ENCODE measurements at regions of chr15 and their contacts with region 1.

Region 1: DNA sequence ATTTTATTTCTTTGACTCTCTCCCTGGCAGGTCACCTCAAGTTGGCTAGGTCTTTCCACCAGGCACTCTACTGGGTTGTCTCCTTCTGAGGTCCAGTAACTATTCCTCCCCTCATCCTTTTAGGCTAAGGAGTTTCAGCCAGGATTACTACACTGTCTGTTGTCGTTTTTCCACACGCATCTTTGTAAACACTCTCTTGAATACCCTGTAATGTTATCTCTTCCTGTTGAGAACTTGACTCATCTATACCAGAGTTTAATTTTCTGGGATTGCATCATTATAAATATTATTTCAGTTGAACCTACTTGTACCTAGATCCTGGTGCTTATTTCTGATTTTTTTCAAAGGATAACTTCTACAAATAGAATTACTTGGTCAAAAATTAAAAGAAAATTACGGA is 138.3 kb downstream of the SQOR start:
- DNase-seq: no peak
- H3K27ac ChIP-seq: no peak overlapping the region
- CTCF ChIP-seq: no peak

Region 2: DNA sequence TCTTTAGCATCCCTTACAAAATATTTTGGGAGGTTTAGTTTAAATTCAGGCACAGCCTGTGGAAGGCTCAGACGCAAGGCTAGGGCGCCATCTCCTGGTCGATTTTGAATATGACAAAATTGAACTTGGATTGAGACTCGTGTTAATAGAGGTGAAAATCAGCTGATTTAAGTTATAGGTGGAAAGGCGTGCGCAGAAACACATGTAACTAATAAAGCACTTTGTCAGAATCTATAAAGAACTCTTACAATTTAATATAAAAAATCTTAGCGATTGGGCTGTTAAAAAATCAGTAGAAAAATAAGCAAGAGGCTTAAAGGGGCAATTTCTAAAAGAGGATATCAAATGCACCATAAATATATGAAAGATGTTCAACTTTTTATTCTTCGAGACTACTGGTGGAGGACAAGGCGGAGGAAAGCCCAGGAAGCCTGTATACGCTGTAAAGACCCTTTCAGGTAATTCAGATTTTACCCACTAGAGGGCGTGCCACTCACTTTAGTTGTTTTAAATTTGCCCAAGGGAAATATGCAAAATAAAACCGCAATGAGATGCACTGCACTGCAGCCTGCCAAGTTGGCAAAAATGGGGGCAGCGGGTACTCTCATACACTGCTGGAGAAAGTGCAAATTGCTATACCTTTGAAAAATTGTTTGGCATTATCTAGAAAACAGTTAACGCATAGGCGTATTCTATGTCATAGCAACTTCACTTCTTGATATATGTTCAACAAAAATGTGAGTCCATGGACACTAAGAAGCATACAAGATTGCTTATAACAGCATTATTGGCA is 315.3 kb before region 1 on chr15:
- CTCF ChIA-PET with region 1: no interaction called
- POLR2A ChIA-PET with region 1: no interaction called
- DNase-seq: peak; percentile 68
- H3K27ac ChIP-seq: no peak overlapping the region; the same call in 1 of the 2 replicates
- CTCF ChIP-seq: peak; percentile 91

Region 3: DNA sequence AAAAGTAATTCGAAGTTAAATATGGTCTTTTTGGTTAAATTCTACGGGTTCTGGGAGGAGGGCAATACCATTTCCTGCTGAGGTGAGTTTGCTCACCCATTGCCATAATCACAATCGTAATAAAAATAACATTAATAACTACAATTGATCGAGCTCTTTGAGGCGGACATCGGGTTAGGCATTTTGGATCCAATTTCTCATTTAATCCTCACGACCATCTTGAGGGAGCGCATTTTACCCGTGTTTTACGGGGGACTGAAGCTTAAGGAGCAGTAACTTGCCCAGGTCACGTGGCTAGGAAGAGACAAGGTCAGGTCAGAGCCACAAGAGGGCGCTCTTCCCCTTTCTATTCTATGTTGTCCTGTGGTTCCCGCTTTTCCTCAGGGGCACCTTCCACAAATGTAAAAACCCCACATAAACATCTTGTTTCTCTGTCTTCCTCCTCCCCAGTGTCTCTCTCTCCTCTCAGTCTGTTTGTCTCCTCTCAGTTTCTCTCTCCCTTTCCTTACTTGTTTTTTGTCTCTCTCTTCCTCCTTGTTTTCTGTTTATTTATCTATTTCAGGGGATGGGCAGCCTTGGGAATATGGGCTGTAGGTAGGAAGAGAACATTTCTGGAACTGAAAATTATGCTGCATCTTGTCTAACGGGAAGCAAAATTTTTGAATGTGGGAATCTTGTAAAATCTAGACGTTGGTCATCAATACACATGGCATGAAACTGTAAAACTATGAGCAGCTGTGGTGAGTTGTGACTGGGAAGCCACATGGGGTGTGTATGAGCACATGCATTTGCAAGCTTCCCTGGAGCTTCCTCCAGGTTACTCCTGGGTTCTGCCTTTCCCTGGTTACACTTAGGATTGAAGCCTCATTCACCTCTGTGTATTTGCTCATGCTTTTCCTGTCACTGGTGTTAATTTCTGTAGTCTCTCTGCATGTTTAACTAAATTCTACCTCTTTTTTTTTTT is 67.4 kb before region 1 on chr15:
- CTCF ChIA-PET with region 1: interaction called, 11 read pairs
- POLR2A ChIA-PET with region 1: no interaction called
- DNase-seq: peak; percentile 77
- H3K27ac ChIP-seq: no peak overlapping the region
- CTCF ChIP-seq: peak; percentile 94

Region 4: GRCh38 chr15:45719490-45719889 is 53.7 kb before region 1 on chr15:
- CTCF ChIA-PET with region 1: no interaction called
- POLR2A ChIA-PET with region 1: no interaction called
- DNase-seq: no peak
- H3K27ac ChIP-seq: no peak overlapping the region
- CTCF ChIP-seq: no peak

Region 5: GRCh38 chr15:46091860-46092450 is 318.8 kb after region 1 on chr15:
- CTCF ChIA-PET with region 1: no interaction called
- POLR2A ChIA-PET with region 1: no interaction called
- DNase-seq: no peak
- H3K27ac ChIP-seq: no peak overlapping the region
- CTCF ChIP-seq: peak; percentile 45

Region 6: GRCh38 chr15:46137443-46137842 is 364.3 kb after region 1 on chr15:
- CTCF ChIA-PET with region 1: no interaction called
- POLR2A ChIA-PET with region 1: no interaction called
- DNase-seq: no peak
- H3K27ac ChIP-seq: no peak overlapping the region
- CTCF ChIP-seq: no peak